Transverse colon (tissue), 4 donors: ENCODE measurements at regions of chr1 and their contacts with region 1.

Region 1: DNA sequence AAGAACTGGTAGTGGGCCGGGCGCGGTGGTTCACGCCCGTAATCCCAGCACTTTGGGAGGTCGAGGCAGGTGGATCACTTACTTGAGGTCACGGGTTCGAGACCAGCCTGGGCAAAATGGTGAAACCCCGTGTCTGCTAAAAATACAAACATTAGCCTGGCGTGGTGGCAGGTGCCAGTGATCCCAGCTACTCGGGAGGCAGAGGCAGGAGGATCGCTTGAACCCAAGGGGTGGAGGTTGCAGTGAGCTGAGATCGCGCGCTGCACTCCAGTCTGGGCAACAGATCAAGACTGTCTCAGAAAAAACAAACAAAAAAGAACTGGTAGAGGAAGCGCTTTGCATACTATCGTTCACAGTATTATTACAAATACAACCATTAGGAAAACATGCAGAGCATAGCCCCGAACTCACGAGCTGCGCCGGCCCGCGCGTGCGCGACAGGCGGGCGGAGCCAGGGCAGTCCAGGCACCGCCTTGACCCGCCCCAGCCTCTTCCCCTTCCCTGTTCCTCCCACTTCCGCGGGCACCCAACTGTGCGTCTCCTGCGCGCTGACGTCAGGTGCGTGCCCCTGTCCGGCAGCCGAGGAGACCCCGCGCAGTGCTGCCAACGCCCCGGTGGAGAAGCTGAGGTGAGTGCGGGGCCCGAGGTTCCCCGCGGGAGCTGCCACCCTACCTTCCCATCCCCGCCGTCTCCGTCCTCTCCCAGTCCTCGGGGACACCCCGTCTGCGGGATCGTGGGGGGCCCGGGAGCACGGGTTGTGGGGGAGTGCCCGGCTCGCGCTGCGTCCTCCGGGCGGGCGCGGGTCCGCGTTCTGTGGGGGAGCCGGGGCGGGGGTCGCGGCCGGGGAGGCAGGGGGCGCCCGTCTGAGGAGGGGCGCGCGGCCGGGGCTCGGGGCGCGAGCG is at the start of gene CDC42:
- DNase-seq: peak; percentile 98
- H3K4me3 ChIP-seq: peak within 1 kb of the TSS; percentile 86 to 100 (median 98)
- H3K27ac ChIP-seq: peak within 1 kb of the TSS; percentile 99 to 100 (median 100)
- H3K4me1 ChIP-seq: peaks cover 16 to 37% (median 31%) of the 10 kb centered on the region in 4 donors
- H3K27me3 ChIP-seq: no peaks in the 10 kb centered on the region
- CTCF ChIP-seq: no peak
- EP300 ChIP-seq: no peak
- POLR2A ChIP-seq: peak; percentile 99
- total RNA-seq, gene CDC42: 140 to 245 (median 174) TPM

Region 2: GRCh38 chr1:22114083-22115012 is 62.0 kb after region 1 on chr1:
- in situ Hi-C with region 1: no loop called
- intact Hi-C with region 1: loop called (anchors 10 kb)
- DNase-seq: no peak
- H3K4me3 ChIP-seq: no peak overlapping the region
- H3K27ac ChIP-seq: peak overlapping the region in 2 of 4 donors; percentile 20 to 24
- H3K4me1 ChIP-seq: peaks cover 3 to 57% (median 25%) of the 10 kb centered on the region in 4 donors
- H3K27me3 ChIP-seq: no peaks in the 10 kb centered on the region
- CTCF ChIP-seq: no peak
- EP300 ChIP-seq: no peak
- POLR2A ChIP-seq: no peak